PC-3 (cell line): ENCODE measurements at regions of chr6 and their contacts with region 1.

Region 1: DNA sequence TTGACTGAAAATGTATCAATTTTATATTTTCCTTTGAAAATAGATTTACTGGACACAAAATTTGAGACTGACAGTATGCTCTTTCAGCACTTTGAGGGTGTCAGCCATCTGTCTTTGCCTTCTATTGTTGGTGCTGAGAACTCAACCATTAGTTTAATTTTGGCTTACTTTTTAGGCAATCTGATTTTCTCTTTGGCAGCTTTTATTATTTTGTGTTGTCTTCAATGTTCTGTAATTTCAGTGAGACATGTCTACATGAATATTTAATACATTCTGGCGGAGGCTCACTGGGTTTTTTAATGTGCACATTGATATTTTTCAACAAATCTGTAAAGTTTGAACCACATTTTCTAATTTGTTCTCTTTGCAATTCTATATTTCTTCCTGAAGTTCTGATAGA is 648.6 kb downstream of the C6orf118 start:
- DNase-seq: no peak
- ATAC-seq: no peak
- H3K4me3 ChIP-seq: no peak overlapping the region
- H3K27ac ChIP-seq: no peak overlapping the region
- H3K4me1 ChIP-seq: no peaks in the 10 kb centered on the region
- H3K27me3 ChIP-seq: no peaks in the 10 kb centered on the region
- CTCF ChIP-seq: no peak

Region 2: GRCh38 chr6:163741743-163742363 is 918.9 kb before region 1 on chr6:
- CTCF ChIA-PET with region 1: no interaction called
- POLR2A ChIA-PET with region 1: interaction called, 10 read pairs
- intact Hi-C with region 1: no loop called
- DNase-seq: no peak
- ATAC-seq: no peak
- H3K4me3 ChIP-seq: no peak overlapping the region
- H3K27ac ChIP-seq: no peak overlapping the region
- H3K4me1 ChIP-seq: no peaks in the 10 kb centered on the region
- H3K27me3 ChIP-seq: peaks cover 4% of the 10 kb centered on the region; the same call in 1 of the 2 replicates
- CTCF ChIP-seq: no peak

Region 3: DNA sequence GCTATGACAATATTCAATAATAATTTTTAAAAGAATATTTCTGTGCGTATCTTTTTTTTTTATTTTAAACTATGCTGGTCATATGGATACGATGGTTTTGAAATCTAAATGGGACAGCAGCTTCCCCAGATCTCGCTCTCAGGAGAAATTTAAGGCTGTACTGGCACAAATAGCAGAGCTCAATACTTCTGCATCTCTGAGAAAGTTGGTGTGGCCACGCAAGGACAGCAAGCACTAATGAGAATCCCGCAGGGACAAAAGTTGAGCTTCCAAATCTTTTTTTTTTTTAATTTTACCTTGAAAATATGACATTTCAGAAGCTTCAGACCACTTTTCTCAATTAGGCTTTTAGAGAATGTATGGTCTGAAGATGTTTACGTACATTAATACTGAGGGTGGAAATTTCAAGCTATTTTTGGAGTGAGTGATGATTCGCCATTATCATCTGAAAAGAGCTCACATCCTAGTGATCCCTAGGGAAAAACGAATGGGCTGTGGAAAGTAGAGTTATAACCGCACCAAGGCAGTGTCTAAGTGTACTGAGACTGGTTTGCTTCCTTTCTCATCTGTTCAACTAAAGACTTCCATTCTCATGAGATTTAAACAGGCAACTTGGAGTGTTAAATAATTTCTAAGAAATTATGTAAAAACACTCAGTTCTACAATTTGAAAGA is 191.4 kb before region 1 on chr6:
- CTCF ChIA-PET with region 1: no interaction called
- POLR2A ChIA-PET with region 1: no interaction called
- intact Hi-C with region 1: no loop called
- DNase-seq: no peak
- ATAC-seq: no peak
- H3K4me3 ChIP-seq: no peak overlapping the region
- H3K27ac ChIP-seq: no peak overlapping the region
- H3K4me1 ChIP-seq: no peaks in the 10 kb centered on the region
- H3K27me3 ChIP-seq: no peaks in the 10 kb centered on the region
- CTCF ChIP-seq: no peak